ENCODE measurements at regions of chr1 and their contacts with region 1.

Region 1: DNA sequence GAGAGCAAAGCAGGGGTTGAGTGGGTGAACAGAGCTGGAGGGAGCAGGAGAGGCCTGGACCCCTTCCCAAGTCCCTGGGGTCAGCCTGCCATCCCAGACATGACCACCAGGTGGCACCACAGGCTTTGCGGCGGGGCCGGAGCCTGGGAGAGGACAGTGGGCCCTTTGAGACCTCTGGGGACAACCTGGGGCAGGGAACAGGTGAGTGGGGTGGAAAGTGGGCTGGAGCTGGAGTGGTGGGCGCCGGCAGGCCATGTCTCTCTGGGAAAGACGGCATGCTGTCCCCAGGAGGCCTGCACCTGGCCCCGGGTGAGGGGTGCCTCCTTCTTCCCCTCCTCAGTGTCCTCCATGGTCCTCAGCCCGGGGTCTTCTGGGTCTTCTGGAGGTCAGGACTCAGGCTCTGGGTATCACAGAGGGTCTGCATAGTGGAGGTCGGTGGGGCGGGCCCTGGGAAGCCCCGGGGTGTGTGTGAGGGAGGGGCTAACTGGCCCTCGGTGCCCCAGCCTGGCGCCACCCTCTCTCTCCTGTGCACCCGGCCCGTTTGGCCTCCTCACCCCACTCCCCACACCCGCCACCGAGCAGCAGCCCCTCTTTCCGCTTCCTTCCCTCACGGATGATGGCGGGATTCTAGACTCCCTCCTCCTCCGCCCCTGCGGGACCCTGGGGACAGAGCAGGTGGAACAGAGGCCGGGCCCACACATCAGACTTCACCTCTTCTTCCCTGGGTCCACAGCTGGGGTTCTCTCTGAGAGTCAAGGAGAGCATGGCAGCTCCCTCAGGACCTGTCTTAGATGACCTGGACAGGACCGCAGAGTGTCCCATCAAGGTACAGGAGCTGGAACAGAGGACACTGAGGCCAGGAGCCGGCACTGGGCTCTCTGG is 28.4 kb upstream of the PKP1 start:
- DNase-seq: peak; percentile 90

Region 2: DNA sequence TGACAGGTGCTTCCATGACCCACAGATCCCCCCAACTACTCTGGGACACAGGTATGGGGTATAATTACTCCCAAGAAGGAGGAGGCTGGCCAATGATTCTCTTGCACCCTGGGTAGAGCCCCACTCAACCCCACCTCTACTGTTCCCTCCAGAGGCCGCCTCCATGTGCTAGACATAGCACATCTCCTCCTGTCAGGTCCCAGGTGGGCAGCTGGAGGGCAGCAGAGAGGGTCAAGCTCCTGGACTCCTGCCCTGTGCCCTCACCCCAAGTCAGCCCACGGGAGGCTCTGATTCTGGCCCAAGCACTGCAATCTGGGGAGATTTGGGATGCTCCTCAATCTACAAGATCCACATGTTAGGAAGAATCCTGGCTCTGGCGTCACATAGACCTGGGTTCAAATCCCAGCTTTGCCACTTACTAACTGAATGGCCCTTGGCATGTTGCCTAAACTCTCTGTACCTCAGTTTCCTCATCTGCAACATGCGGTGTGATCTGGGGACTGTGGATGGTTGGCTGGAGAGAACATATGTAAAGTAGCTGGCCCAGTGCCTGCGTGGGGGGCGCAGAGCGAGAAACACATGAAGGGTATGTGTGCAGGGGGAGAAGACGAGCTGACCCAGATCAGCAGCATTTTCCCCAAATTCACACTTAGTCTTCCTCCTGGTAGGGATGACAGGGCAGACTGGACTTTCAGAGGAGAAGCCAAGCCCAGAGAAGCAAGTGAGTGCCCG is 99.4 kb after region 1 on chr1:
- intact Hi-C with region 1: loop called in 1 of 2 experiments (anchors 2 kb)
- DNase-seq: peak; percentile 29

Region 3: GRCh38 chr1:201361652-201362504 is 107.0 kb after region 1 on chr1:
- intact Hi-C with region 1: loop called in 1 of 2 experiments (anchors 5 kb)
- DNase-seq: no peak

Region 4: DNA sequence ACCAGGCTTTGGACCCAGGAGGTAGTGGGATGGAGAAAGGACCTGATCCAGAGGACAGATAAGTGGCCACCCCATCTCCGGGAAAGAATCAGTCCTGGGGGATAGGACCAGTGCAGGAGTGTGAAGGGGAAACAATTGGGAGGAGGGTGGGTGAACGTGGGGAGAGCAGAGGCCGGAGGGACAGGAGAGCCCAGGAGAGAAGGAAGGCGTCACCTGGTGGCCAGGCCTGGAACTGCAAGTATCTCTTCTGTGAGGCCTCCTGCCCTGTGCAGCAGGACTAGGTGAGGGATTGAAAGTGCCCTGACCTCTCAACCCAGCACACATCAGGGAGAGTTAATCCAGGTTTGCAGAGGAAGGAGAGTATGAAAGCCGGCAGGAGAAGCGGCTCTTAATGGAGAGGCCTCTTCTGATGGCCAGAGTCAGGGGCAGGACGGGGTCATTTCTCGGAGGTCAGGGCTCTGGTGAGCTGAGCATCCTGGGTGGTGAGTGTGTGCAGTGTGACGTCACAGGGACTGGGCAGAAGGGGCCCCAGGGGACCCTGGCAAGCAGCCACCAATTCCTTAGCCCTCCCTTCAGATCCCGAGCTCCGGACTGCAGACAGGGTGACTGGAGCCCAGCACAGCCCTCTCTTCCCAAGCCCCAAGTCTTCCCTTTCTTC is 153.4 kb after region 1 on chr1:
- intact Hi-C with region 1: loop called in 1 of 2 experiments (anchors 10 kb)
- DNase-seq: peak; percentile 89

Region 5: DNA sequence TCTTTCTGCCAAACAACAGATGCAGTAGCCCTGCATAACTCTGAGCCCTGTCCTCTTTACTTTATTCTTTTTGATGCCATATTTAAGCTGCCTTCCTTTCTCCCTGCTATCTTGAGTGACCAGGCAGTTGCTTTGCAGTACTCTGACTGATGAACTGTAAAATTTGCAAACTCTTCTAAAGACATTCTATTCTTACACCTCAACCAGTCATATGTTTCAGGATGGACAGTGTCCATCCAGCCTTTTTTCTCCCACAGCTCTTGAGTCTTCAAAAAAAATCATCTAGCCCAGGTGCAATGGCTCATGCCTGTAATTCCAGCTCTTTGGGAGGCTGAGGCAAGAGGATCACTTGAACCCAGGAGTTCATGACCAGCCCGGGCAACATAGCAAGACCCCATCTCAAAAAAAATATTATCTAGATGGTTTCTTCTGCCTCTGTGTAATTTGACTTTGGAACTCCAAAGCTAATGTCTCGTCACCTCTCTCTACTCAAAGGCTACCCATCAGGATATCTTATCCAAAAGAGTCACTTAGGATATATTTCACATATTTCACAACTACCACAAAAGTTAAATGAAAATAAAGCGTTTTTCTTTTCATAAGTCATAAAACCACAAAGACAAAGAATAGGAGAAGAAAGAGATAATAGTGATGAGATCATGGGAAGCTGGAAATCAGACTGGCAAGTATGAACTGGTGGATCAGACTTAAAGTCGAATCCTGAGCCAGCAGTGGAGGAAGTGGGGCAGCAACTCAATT is 519.5 kb after region 1 on chr1:
- intact Hi-C with region 1: no loop called
- DNase-seq: no peak